Brain microvascular endothelial cell (primary cell): ENCODE measurements at regions of chr10 and their contacts with region 1.

Region 1: DNA sequence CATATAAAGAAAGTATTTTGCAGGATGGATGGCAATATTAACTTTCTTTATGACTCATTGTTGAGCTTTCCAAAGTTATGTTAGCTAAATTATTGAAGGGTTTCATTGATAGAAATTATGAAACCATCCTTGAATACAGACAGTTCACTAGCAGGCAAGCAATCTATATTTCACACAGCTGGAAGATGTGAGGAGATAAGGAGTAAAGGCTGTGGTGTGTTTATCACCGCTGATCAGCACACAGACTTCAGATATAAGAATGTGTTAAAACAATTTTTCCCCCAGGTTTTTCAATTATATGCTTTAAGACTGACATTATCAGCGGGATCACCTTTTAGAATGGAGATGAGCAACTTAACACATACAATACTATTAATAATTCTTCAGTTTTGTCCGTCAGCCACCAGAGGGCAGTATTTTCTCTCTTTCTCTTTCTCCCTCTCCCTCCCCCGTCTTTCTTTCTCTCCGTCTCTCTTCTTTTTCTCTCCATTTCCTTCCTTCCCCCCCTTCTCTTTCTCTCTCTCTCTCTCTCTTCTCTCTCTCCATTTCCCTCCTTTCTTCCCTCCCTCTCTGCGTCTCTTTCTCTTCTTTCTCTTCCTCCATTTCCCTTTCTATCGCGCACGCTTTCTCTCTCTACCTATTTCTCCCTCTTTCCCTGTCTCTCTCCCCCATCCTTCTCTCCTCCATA is 62.9 kb upstream of the FAM171A1 start:
- DNase-seq: peak; percentile 45
- H3K4me3 ChIP-seq: peak overlapping the region; percentile 38
- H3K27ac ChIP-seq: no peak overlapping the region
- H3K27me3 ChIP-seq: no peaks in the 10 kb centered on the region
- CTCF ChIP-seq: peak; percentile 65

Region 2: DNA sequence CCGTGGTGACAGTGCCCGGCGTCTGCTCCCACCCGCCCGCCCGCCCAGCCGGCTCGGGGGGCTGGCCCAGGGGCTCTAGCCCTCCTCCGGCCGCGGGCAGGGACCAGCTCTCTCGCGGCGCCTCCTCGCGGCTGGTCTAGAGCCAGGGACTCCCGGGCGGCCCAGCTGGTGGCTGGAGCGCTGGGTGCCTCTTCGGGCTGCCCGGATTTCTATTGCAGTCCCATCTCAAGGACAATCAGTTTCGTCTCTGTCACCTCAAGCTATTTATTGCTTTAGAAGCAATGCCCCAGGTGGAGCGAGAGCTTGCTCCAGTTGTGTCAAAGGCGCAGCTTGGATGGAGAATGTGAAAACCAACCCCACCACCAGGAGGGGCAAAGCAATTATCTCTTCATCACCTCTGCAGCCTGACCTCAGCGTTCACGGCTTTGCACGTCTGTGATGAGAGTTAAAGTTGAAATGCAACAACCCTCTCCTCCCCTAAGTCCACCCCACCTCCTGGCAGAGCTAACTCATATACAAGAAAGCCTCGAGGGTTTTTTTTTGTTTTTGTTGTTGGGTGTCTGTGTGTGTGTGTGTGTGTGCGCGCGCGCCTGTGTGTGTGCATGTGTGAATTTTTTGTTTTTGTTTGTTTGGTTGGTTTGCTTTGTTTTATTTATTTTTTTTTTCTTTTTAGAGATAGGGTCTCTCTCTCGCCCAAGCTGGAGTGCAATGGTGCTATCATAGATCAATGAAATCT is 286.1 kb after region 1 on chr10 and contains the start of gene ITGA8:
- in situ Hi-C with region 1: loop called (anchors 25 kb)
- DNase-seq: peak; percentile 24
- H3K4me3 ChIP-seq: peak within 1 kb of the TSS; percentile 41
- H3K27ac ChIP-seq: no peak within 1 kb of the TSS
- H3K27me3 ChIP-seq: peaks cover 11% of the 10 kb centered on the region
- CTCF ChIP-seq: peak; percentile 67